ENCODE measurements at regions of chr1 and their contacts with region 1.

Region 1: GRCh38 chr1:185681034-185681633 is 53.1 kb upstream of the HMCN1 start:
- DNase-seq: peak; percentile 24
- H3K4me3 Mint-ChIP-seq: no peak overlapping the region
- H3K27ac Mint-ChIP-seq: no peak overlapping the region
- H3K4me1 Mint-ChIP-seq: peaks cover 22% of the 10 kb centered on the region
- H3K27me3 Mint-ChIP-seq: no peaks in the 10 kb centered on the region

Region 2: DNA sequence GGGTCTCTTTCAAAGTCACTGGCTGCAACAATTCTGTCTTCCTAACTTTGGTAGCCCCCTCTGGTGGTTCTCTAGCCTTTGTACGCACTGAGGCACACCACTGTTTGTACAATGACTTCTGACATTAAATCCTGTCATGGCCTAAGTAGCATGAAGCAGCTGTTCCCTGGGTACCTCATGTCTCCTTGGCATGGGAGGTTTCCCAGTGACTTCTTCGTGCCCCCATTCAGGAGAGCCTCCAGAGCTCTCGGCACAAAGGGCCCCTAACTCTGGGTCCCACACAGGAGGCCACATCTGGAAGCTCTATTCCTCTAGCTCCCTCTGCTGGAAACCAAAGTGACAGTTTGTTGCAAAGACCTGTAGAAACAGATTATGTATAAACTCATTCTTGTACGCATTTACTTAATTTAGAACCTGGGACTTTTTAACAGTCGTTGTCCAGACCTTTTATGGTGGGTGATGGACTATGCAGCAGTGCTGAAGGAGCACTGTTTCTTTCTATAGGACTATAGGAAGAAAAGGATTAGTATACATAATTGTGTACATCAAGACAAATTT is 510.8 kb before region 1 on chr1:
- CTCF ChIA-PET with region 1: interaction called, 20 read pairs
- POLR2A ChIA-PET with region 1: no interaction called
- DNase-seq: peak; percentile 40
- H3K4me3 Mint-ChIP-seq: no peak overlapping the region
- H3K27ac Mint-ChIP-seq: no peak overlapping the region
- H3K4me1 Mint-ChIP-seq: peaks cover 18% of the 10 kb centered on the region
- H3K27me3 Mint-ChIP-seq: no peaks in the 10 kb centered on the region

Region 3: GRCh38 chr1:185238447-185238846 is 442.7 kb before region 1 on chr1:
- CTCF ChIA-PET with region 1: interaction called, 18 read pairs
- POLR2A ChIA-PET with region 1: interaction called, 5 read pairs
- DNase-seq: no peak
- H3K4me3 Mint-ChIP-seq: no peak overlapping the region
- H3K27ac Mint-ChIP-seq: no peak overlapping the region
- H3K4me1 Mint-ChIP-seq: peaks cover 15% of the 10 kb centered on the region
- H3K27me3 Mint-ChIP-seq: no peaks in the 10 kb centered on the region

Region 4: DNA sequence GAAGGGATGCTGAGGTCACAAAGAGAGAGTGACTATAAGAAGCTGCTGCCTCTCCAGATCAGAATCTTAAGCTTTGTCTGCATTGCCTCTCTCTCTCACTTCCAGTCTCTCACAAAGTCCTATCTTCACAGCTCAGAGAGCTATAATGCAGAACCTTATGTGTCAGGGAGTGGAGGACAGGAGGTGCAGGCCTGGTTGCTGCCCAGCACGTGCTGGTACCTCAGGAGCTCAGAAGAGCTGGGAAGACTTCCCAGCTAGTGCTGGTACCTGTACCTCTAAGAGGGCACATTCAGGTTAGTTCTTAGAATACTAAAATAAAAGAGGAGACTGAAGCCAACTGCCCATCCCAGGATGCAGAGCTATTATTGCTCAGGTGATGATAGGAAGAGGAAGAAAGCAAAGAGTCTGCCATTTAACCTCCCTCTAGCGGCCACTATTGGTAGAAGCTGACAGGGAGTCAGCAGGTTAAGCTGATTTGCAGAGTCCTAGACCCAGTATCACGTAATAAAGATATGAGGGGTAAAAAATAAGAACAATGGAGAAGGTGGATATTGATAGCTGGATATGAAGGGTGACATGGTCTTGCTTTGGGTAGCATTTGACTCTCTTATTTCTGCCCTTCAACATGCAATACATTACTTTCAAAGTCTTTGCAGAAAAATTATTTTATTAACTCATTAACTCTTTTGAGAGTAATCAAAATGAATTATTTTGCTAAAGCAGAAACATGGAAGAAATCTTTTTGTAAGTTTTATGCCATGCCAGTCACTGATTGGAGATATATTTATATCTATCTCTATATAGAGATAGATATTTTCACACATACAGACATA is 85.1 kb before region 1 on chr1:
- CTCF ChIA-PET with region 1: interaction called, 12 read pairs
- POLR2A ChIA-PET with region 1: no interaction called
- DNase-seq: peak; percentile 55
- H3K4me3 Mint-ChIP-seq: no peak overlapping the region
- H3K27ac Mint-ChIP-seq: no peak overlapping the region
- H3K4me1 Mint-ChIP-seq: peaks cover 16% of the 10 kb centered on the region
- H3K27me3 Mint-ChIP-seq: no peaks in the 10 kb centered on the region

Region 5: GRCh38 chr1:185627171-185627570 is 54.0 kb before region 1 on chr1:
- CTCF ChIA-PET with region 1: no interaction called
- POLR2A ChIA-PET with region 1: no interaction called
- DNase-seq: no peak
- H3K4me3 Mint-ChIP-seq: no peak overlapping the region
- H3K27ac Mint-ChIP-seq: no peak overlapping the region
- H3K4me1 Mint-ChIP-seq: no peaks in the 10 kb centered on the region
- H3K27me3 Mint-ChIP-seq: no peaks in the 10 kb centered on the region

Region 6: DNA sequence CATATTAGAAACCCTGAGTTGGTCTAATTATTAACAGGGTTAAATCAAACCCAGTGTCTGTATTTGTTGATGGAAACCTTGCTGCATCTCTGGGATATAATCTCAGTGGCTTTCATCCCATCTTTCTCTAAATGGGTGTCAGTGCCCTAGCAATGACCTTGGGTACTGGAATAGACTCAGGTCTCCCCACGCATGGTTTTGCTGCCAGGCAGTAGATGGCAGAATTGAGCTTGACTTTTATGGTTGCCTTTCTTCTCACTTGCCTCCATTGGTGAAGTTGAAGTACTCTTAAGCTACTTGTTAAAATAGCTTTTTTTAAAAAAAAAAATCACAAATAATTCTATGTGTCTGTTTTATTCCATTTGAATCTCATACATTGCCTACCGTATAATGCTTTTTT is 28.8 kb before region 1 on chr1:
- CTCF ChIA-PET with region 1: interaction called, 26 read pairs
- POLR2A ChIA-PET with region 1: no interaction called
- DNase-seq: no peak
- H3K4me3 Mint-ChIP-seq: no peak overlapping the region
- H3K27ac Mint-ChIP-seq: no peak overlapping the region
- H3K4me1 Mint-ChIP-seq: peaks cover 8% of the 10 kb centered on the region
- H3K27me3 Mint-ChIP-seq: no peaks in the 10 kb centered on the region

Region 7: GRCh38 chr1:185821612-185822385 is 140.7 kb after region 1 on chr1:
- CTCF ChIA-PET with region 1: no interaction called
- POLR2A ChIA-PET with region 1: no interaction called
- DNase-seq: no peak
- H3K4me3 Mint-ChIP-seq: no peak overlapping the region
- H3K27ac Mint-ChIP-seq: no peak overlapping the region
- H3K4me1 Mint-ChIP-seq: no peaks in the 10 kb centered on the region
- H3K27me3 Mint-ChIP-seq: peaks cover 4% of the 10 kb centered on the region